ENCODE measurements at regions of chr20 and their contacts with region 1.

Region 1: GRCh38 chr20:6767536-6768227 is at the start of gene BMP2:
- DNase-seq: peak; percentile 47 to 69
- ATAC-seq: peak; percentile 70 to 88 (median 76)
- H3K4me3 ChIP-seq: peak within 1 kb of the TSS; percentile 66 to 87 (median 78)
- H3K27ac ChIP-seq: peak within 1 kb of the TSS; percentile 39 to 84 (median 72)
- H3K4me1 ChIP-seq: peaks cover 0 to 31% (median 17%) of the 10 kb centered on the region in 9 donors
- H3K27me3 ChIP-seq: peaks cover 0 to 58% (median 0%) of the 10 kb centered on the region in 7 donors
- CTCF ChIP-seq: peak in 2 of 9 donors; percentile 14 to 18
- total RNA-seq, gene BMP2: 0.89 to 3.1 (median 2.4) TPM

Region 2: DNA sequence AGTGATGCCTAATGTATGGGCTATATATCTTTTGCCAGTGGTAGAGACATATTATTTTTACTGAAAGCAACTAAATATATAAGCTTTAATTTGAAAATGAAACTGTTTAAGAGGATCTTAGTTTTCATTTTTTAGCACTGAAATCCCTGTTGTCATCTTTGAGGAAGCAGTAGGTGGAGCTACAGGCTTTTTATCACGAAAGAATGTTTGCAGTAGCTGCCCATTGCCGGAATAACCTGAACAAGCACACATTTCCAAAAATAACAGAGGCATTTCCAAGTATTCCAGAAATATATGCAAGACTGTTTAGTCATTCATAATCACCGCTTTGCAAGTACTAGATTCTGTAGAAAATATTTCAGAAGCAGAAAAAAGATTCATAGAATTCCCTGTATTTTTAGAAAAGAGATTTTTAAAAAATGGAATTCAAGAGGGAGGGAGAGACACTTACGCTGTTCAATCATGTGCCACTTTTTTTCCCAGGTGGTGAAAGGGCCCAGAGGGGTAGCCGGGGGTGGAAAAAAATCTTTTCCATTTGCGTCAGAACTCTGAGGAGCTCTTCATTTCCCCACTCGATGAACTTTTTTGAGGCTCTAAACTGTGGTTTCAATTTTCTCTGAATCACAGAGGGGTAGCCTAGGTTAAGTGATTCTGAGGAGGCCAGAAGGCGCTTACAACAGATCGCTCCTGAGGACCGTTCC is 502.3 kb before region 1 on chr20:
- intact Hi-C with region 1: loop called in 2 of 10 experiments (anchors 5 to 10 kb)
- DNase-seq: peak in 1 of 2 donors; percentile 35
- ATAC-seq: peak in 7 of 8 donors; percentile 61 to 91 (median 79)
- H3K4me3 ChIP-seq: peak overlapping the region in 4 of 10 donors; percentile 1 to 27 (median 24)
- H3K27ac ChIP-seq: peak overlapping the region in 7 of 10 donors; percentile 1 to 71 (median 55)
- H3K4me1 ChIP-seq: peaks cover 0 to 14% (median 5%) of the 10 kb centered on the region in 9 donors
- H3K27me3 ChIP-seq: peaks cover 0 to 9% (median 0%) of the 10 kb centered on the region in 7 donors
- CTCF ChIP-seq: peak in 7 of 9 donors; percentile 21 to 69 (median 48)

Region 3: DNA sequence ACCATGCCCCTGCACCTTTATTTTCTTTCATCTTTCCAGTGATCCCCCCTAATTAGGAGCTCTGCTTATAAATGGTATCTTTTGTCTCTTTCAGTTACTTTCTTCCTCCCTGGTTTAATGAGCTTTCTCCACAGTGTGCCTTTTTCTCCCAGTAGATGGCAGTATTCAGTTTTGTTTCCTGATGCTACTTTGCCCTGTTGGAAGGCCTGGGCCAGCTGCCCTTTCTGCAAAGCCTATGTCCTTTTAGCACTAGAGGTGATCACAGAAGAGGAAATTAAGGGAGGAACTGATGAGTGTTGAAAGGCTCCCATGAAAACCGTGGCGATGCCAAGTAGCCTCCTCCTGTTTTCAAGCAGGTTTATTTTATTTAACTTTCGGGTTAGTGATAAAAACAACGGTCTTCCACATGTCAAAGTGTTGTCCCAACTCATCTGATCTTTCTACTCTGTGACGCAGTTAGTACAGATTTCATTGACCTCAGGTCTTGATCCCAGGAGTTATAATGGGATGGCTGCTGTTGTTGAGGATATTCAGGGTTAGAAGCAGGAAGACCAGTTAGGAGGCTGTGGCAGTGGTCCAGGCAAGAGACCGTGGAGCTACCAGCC is 184.4 kb before region 1 on chr20:
- intact Hi-C with region 1: loop called in 3 of 10 experiments (anchors 10 kb)
- DNase-seq: peak; percentile 28 to 47
- ATAC-seq: peak in 7 of 8 donors; percentile 49 to 84 (median 70)
- H3K4me3 ChIP-seq: no peak overlapping the region
- H3K27ac ChIP-seq: no peak overlapping the region
- H3K4me1 ChIP-seq: no peaks in the 10 kb centered on the region
- H3K27me3 ChIP-seq: no peaks in the 10 kb centered on the region
- CTCF ChIP-seq: peak; percentile 16 to 73 (median 67)

Region 4: DNA sequence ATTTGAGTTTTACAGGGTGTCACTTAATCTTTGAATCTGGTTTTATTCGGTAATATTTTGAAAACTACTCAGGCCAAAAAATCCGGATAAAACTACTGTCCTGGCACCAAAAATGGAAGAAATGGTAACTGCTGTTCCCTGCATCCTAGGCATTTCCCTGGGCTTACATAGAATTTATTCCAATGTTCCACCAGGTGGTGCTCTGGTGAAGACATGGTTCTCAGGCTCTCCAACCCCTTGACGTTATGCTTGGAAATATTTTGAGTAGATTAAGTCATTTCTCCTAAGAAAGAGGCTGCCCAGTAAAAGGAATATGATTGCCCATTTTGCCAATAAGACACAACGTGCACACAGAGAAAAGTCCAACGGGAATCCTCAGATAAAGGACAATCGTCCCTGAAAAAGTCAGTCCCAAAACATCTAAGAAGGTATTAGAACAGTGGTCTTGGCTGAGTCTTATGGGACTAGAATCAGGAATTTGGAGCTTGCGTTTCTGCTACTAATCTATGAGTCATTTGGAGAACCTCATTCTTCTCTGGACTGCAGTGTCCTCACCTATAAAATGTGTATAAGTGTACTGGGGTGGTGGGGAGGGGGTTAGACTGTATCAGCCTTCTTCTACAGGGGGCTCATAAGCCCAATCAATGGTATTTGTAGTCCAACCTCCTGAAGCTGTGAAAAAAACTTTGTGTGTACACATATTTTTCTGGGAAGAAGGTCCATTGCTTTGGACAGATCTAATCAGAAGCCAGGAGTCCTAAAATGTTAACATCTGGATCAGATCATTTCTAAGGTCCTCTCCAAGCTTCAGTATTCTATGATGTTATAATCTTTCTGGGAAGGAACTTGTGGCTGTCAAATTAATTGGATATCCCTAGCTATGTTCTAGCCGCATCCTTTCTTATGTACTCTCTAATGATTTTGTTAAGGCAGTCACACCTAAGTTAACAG is 131.2 kb before region 1 on chr20:
- intact Hi-C with region 1: loop called in 7 of 10 experiments (anchors 1 to 10 kb)
- DNase-seq: peak in 1 of 2 donors; percentile 45
- ATAC-seq: peak; percentile 64 to 90 (median 84)
- H3K4me3 ChIP-seq: no peak overlapping the region
- H3K27ac ChIP-seq: peak overlapping the region in 1 of 10 donors; percentile 7
- H3K4me1 ChIP-seq: peaks cover 0 to 7% (median 0%) of the 10 kb centered on the region in 9 donors
- H3K27me3 ChIP-seq: peaks cover 0 to 5% (median 0%) of the 10 kb centered on the region in 7 donors
- CTCF ChIP-seq: peak; percentile 24 to 68 (median 58)

Region 5: DNA sequence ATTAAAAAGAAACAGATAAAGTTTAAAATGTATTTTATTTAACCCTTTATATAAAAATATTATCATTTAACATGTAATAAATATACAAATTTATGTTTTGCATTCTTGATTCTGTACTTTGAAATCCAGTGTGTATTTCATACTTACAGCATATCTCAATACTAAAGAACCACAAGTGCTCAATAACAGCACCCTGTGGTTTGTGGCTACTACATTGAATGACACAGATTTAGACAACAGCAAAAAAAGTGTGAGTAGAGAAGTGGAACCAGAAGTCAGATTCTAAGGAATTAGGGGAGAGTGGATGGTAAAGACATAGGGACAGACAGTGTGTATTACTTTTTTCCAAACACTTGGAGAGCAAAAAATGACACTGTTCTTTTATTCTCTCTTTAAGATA is 524.3 kb after region 1 on chr20:
- intact Hi-C with region 1: loop called in 3 of 10 experiments (anchors 10 kb)
- DNase-seq: no peak
- ATAC-seq: no peak
- H3K4me3 ChIP-seq: no peak overlapping the region
- H3K27ac ChIP-seq: no peak overlapping the region
- H3K4me1 ChIP-seq: no peaks in the 10 kb centered on the region
- H3K27me3 ChIP-seq: peaks cover 0 to 4% (median 0%) of the 10 kb centered on the region in 7 donors
- CTCF ChIP-seq: no peak

Region 6: DNA sequence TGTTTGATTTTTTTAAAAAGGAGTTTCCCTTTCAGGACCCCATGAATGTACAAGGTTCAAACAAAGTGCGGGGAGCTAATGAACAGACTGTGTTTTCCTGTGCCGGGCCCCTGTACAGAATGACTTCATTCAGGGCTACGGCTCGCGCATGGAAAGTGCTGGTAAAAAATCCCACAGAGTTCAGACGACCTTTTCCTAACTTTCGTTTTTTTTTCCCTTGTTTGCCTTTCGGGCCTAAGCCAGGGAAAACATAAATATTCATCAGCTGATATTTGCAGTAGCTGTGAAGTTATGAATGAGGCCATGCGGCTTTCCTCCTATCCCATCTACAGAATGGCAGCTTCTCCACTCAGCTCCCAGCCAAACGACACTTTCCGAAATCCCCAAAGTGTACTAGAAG is 1098.6 kb after region 1 on chr20:
- intact Hi-C with region 1: loop called in 1 of 10 experiments (anchors 10 kb)
- DNase-seq: no peak
- ATAC-seq: peak in 1 of 8 donors; percentile 61
- H3K4me3 ChIP-seq: peak overlapping the region in 1 of 10 donors; percentile 18
- H3K27ac ChIP-seq: peak overlapping the region in 1 of 10 donors; percentile 38
- H3K4me1 ChIP-seq: no peaks in the 10 kb centered on the region
- H3K27me3 ChIP-seq: no peaks in the 10 kb centered on the region
- CTCF ChIP-seq: no peak

Measured in heart right ventricle (tissue), 16 donors.